MCF 10A (cell line): ENCODE measurements at regions of chr9 and their contacts with region 1.

Region 1: DNA sequence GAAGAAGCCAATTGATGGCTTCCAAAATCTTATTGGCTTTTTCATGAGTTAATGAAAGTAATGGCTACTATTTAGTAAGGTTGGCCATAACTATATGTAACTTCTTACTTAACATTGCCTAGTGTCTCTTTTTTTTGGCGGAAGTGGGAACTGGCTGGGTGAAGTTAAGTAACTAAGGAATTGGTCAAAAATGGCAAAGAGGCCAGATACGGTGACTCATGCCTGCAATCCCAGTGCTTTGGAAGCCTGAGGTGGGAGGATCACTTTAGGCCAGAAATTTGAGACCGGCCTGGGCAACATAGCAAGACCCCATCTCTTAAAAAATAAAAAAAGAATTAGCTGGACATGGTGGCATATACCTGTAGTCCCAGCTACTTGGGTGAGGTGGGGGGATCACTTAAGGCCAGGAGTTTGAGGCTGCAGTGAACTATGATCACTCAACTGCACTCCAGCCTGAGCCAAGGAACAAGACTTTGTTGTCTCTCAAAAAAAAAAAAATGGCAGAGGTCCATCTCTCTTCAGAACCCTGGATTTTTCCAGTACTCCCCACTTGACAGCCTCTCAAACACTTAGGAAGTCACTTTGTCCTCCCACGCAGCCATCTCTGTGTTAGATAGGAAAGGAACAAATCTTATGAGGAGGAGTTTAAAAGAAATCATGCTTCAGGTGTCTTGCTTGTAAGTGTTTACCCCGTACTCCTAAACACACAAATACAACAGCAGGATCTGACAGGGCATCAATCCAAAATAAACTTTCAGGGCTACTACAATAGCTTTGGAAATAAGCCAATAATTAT is 75.7 kb downstream of the TEK start:
- DNase-seq: peak; percentile 95
- H3K4me3 Mint-ChIP-seq: no peak overlapping the region
- H3K27ac Mint-ChIP-seq: peak overlapping the region; percentile 19
- H3K4me1 Mint-ChIP-seq: peaks cover 43% of the 10 kb centered on the region
- H3K27me3 Mint-ChIP-seq: no peaks in the 10 kb centered on the region
- CTCF ChIP-seq: no peak

Region 2: DNA sequence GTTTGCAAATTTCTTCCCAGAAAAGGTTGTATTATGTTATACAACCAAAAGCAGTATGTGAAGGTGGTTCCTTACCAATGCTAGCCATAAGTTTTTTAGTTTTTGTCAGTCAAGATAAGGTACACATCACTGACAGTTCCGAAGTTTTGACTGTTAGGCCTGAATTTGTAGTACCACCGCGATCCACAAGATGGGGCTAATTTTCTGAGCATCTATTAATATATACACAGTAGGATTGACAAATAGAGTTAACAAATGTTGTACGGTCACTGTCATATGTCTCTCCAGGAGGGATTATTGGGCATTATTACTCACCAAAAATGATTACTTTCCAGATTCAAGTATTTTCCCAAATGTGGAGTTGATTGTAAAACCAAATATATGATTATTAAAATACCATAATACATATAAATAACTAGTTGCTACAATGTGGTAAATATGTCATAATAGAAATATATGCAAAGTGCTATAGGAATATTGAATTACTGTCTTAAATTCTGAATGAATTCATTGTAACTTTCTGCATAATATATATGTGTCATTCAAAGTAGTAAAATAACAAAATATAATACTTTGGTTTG is 150.8 kb before region 1 on chr9:
- CTCF ChIA-PET with region 1: no interaction called
- POLR2A ChIA-PET with region 1: no interaction called
- intact Hi-C with region 1: loop called (anchors 5 kb)
- DNase-seq: peak; percentile 71
- H3K4me3 Mint-ChIP-seq: no peak overlapping the region
- H3K27ac Mint-ChIP-seq: no peak overlapping the region
- H3K4me1 Mint-ChIP-seq: peaks cover 6% of the 10 kb centered on the region
- H3K27me3 Mint-ChIP-seq: no peaks in the 10 kb centered on the region
- CTCF ChIP-seq: peak; percentile 64

Region 3: GRCh38 chr9:27117489-27118135 is 67.1 kb before region 1 on chr9:
- CTCF ChIA-PET with region 1: no interaction called
- POLR2A ChIA-PET with region 1: no interaction called
- intact Hi-C with region 1: loop called (anchors 5 kb)
- DNase-seq: peak; percentile 93
- H3K4me3 Mint-ChIP-seq: no peak overlapping the region
- H3K27ac Mint-ChIP-seq: peak overlapping the region; percentile 59
- H3K4me1 Mint-ChIP-seq: peaks cover 40% of the 10 kb centered on the region
- H3K27me3 Mint-ChIP-seq: no peaks in the 10 kb centered on the region
- CTCF ChIP-seq: no peak

Region 4: DNA sequence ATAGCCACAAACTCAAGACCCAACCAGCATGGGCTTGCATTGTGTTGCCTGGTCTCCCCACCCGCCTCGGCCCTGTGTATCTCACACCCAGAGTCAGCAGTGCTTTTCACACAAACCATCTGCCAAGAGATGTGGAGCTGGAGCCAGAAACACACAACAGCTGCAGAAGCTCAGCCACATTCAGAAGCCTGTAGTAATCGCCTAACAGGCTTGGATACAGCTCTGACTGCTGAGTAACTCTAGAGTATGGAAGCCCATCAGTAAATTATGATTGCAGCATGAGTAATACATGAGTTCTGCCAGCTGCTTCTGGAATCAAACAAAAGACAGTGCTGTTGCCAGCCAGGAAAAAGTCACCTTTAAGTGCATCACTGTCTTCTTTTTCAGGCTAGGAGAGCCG is 59.7 kb before region 1 on chr9:
- CTCF ChIA-PET with region 1: no interaction called
- POLR2A ChIA-PET with region 1: interaction called, 32 read pairs
- intact Hi-C with region 1: no loop called
- DNase-seq: peak; percentile 93
- H3K4me3 Mint-ChIP-seq: no peak overlapping the region
- H3K27ac Mint-ChIP-seq: peak overlapping the region; percentile 78
- H3K4me1 Mint-ChIP-seq: peaks cover 43% of the 10 kb centered on the region
- H3K27me3 Mint-ChIP-seq: no peaks in the 10 kb centered on the region
- CTCF ChIP-seq: no peak